Heart right ventricle (tissue), 16 donors: ENCODE measurements at regions of chr13 and their contacts with region 1.

Region 1: DNA sequence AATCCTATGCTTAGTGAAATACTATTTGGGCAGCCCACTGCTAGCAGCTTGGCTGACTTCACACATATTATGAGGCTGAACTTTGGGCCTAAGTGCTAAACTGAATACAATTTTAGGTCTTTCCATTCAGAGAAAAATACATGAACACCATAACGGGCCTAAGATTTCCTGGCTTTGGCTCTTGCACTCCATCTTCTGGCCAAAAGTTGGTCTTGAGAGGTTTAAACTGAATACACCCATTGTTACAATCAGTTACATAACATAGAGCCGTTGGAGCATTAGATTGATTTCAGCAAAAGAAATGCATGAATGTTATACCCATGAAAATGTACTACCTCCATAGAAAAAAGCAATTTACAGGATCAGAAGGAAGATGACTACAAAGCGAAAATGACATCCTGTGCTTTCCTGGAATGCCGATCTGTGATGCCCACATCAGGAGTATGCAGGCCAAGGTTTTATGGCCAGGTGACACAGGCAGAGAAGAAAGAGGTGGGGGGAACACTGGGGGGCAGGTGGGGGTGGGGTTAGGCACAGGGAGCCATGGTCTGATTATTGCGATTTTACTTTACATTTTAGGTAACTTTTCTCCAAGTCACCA is 11.1 kb upstream of the SHISA2 start:
- DNase-seq: peak in 1 of 2 donors; percentile 48
- ATAC-seq: peak in 7 of 8 donors; percentile 69 to 93 (median 79)
- H3K4me3 ChIP-seq: no peak overlapping the region
- H3K27ac ChIP-seq: no peak overlapping the region
- H3K4me1 ChIP-seq: no peaks in the 10 kb centered on the region
- H3K27me3 ChIP-seq: peaks cover 0 to 22% (median 13%) of the 10 kb centered on the region in 7 donors
- CTCF ChIP-seq: peak; percentile 47 to 81 (median 74)

Region 2: DNA sequence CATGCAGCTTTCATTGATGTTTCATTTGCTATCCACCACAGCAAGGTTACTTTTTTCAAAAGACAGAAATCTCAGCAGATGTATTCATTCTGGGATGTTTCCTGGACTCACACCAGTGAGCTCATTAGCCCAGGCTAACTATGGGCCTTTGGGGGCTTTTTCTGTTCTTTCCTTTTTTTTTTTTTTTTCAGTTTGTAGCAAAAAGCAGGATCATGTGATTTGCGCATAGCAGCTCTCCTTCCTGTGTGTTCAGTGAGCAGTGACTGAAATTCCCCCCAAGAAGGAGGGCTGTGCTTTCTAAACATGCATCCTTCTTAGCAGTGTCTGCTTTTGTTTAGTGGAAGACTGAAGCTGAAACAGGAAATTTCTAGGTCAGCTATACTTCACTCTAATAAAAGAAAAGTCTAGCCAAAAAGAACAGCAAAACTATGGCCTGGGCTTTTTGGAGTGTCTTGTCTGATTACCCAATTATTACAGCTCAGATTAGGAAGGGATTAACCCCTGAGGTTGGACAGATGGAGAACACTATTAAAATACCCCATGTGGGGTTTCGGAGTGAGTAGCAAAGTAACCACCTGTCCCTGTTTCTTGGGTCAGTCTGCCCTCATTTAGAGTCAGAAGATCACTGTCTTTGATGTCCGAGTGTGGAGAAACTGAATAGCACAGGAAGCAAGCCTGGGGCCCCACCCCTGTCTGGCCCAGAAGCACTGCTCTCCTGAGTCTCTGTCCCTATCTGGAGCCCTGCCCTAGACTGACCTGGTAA is 882.0 kb before region 1 on chr13:
- intact Hi-C with region 1: no loop called
- DNase-seq: no peak
- ATAC-seq: no peak
- H3K4me3 ChIP-seq: no peak overlapping the region
- H3K27ac ChIP-seq: no peak overlapping the region
- H3K4me1 ChIP-seq: no peaks in the 10 kb centered on the region
- H3K27me3 ChIP-seq: peaks cover 0 to 67% (median 38%) of the 10 kb centered on the region in 7 donors
- CTCF ChIP-seq: no peak

Region 3: DNA sequence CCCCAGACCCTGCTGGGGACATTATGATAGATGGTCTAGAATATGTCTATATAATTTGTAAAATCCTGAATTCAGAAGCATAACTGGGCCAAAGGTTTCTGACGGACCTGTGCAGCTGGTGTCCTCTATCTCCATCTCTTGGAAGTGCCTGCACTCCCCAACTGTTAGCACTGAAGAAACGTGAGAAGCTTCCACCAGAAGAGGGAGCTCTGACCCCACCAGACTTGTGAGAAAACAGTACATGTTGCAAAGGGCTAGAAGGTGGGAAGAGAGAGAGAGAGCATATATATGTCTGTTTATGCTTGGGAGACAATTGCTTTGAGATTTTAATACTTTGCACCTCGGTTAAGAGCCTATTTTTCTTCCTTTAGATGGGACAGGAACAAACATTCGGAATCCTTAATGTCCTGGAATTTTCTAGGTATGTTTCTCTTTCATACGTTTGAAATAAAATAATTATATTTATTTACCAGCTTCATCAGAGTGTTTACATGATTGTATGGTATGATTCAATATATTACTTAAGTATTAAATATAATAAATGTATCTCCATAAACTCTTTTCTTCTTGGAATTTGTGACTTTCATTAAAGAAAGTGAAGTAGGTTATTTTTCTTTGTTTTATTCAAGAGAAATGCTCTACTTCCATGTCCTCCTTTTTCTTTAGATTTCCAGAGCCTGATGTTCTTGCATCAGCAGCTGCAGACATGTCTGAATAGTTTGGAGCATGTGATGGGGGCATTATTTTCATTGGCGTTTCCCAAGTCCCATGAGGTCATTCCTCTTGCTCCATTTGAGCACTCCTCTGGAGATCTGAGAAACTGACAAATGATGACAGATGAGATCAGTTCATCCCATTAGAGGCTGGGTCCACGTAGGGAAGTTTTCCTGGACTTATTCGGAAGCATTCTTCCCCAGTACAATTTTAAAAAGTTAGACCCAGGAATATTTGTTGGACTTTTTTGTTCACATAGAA is 488.2 kb before region 1 on chr13:
- intact Hi-C with region 1: loop called (anchors 1 to 5 kb)
- DNase-seq: peak; percentile 15 to 85
- ATAC-seq: peak; percentile 65 to 94 (median 90)
- H3K4me3 ChIP-seq: no peak overlapping the region
- H3K27ac ChIP-seq: no peak overlapping the region
- H3K4me1 ChIP-seq: no peaks in the 10 kb centered on the region
- H3K27me3 ChIP-seq: peaks cover 0 to 69% (median 40%) of the 10 kb centered on the region in 7 donors
- CTCF ChIP-seq: peak; percentile 53 to 90 (median 84)

Region 4: GRCh38 chr13:25819856-25820530 is 243.0 kb before region 1 on chr13:
- intact Hi-C with region 1: loop called in 1 of 10 experiments (anchors 10 kb)
- DNase-seq: peak in 1 of 2 donors; percentile 11
- ATAC-seq: no peak
- H3K4me3 ChIP-seq: no peak overlapping the region
- H3K27ac ChIP-seq: no peak overlapping the region
- H3K4me1 ChIP-seq: no peaks in the 10 kb centered on the region
- H3K27me3 ChIP-seq: no peaks in the 10 kb centered on the region
- CTCF ChIP-seq: no peak

Region 5: GRCh38 chr13:25836574-25837336 is 226.2 kb before region 1 on chr13:
- intact Hi-C with region 1: loop called in 1 of 10 experiments (anchors 10 kb)
- DNase-seq: no peak
- ATAC-seq: no peak
- H3K4me3 ChIP-seq: no peak overlapping the region
- H3K27ac ChIP-seq: no peak overlapping the region
- H3K4me1 ChIP-seq: no peaks in the 10 kb centered on the region
- H3K27me3 ChIP-seq: peaks cover 0 to 8% (median 0%) of the 10 kb centered on the region in 7 donors
- CTCF ChIP-seq: no peak

Region 6: GRCh38 chr13:25963674-25964073 is 99.3 kb before region 1 on chr13:
- intact Hi-C with region 1: loop called in 1 of 10 experiments (anchors 10 kb)
- DNase-seq: no peak
- ATAC-seq: peak in 1 of 8 donors; percentile 48
- H3K4me3 ChIP-seq: no peak overlapping the region
- H3K27ac ChIP-seq: no peak overlapping the region
- H3K4me1 ChIP-seq: no peaks in the 10 kb centered on the region
- H3K27me3 ChIP-seq: peaks cover 0 to 14% (median 0%) of the 10 kb centered on the region in 7 donors
- CTCF ChIP-seq: no peak

Region 7: GRCh38 chr13:25980255-25980654 is 82.7 kb before region 1 on chr13:
- intact Hi-C with region 1: loop called in 1 of 10 experiments (anchors 10 kb)
- DNase-seq: no peak
- ATAC-seq: peak in 1 of 8 donors; percentile 35
- H3K4me3 ChIP-seq: no peak overlapping the region
- H3K27ac ChIP-seq: no peak overlapping the region
- H3K4me1 ChIP-seq: no peaks in the 10 kb centered on the region
- H3K27me3 ChIP-seq: peaks cover 0 to 23% (median 16%) of the 10 kb centered on the region in 7 donors
- CTCF ChIP-seq: peak in 8 of 9 donors; percentile 11 to 48 (median 22)